B cell (primary cell): ENCODE measurements at regions of chr18 and their contacts with region 1.

Region 1: DNA sequence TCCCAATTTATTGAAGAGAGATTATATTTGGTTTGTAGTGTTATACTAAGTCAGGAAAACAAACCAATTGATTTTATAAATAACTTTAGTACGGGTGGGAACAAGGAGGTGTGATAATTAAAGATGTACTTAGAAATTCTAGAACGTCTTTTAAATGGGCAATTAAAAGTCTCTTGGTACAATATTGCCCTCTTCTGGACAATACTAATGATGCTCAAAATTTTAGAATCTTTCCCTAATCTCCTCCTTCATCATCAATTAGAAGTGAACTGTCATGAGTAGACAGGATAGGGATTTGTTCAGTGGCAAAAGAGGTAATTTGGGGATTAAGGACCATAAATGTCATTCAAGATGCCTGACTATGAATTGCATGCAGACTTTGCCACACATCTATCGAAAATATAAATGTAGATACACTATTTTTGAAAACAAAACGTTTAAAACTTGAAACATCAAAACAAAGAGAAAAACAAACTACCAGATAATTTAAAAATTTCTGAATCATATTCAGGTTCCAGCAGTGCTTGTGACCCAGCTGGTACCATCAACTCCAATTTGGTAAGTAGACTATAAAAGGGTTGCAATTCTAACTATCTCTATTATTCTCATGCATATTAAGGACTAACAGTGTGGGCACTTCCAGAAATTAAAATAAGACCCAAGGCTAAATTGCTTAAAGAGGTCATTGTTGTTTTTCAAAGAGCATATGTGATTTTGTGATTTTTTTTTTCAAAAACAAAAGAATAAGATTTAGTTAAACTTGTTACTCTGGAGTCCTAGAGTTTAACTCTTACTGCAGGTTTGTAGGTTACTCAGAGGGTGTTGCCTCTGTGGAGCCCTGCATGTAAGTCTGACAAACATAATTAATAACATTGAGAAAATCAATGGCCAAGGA is 123.5 kb downstream of the LAMA3 start:
- DNase-seq: peak; percentile 40
- ATAC-seq: peak; percentile 33
- H3K4me3 ChIP-seq: no peak overlapping the region
- H3K4me3 Mint-ChIP-seq: no peak overlapping the region
- H3K27ac ChIP-seq: no peak overlapping the region
- H3K27ac Mint-ChIP-seq: no peak overlapping the region
- H3K4me1 ChIP-seq: peaks cover 5 to 8% of the 10 kb centered on the region in 2 donors
- H3K4me1 Mint-ChIP-seq: peaks cover 8% of the 10 kb centered on the region
- H3K27me3 ChIP-seq: no peaks in the 10 kb centered on the region
- H3K27me3 Mint-ChIP-seq: peaks cover 5% of the 10 kb centered on the region
- CTCF ChIP-seq: peak; percentile 71

Region 2: DNA sequence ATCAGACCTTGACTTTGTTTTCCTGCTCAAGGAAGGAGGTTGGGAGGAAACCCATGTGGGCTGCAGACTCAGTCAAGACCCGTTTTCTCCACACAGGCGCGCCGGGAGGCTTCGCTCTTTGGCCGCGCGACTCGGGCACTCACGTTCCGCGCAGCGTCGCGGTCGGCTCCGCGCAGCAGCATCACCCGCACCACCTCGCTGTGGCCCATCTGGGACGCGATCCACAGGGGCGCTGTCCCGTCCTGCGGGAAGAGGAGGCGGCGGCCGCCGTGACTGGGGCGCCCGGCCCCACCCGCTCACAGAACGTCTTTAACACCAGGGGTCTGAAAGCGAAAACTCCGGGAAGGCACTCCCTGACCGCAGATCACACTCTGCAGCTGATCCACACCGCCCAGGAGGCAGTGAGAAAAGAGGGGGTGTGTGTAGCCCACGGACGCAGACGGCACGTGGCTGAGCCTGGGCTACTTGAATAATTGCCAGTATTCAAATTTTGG is 193.4 kb before region 1 on chr18:
- CTCF ChIA-PET with region 1: no interaction called
- POLR2A ChIA-PET with region 1: no interaction called
- intact Hi-C with region 1: loop called (anchors 1 kb)
- DNase-seq: peak; percentile 34
- ATAC-seq: peak; percentile 33
- H3K4me3 ChIP-seq: peak overlapping the region; percentile 4 to 52 (median 38)
- H3K4me3 Mint-ChIP-seq: peak overlapping the region; percentile 77
- H3K27ac ChIP-seq: no peak overlapping the region
- H3K27ac Mint-ChIP-seq: no peak overlapping the region
- H3K4me1 ChIP-seq: peaks cover 12 to 15% of the 10 kb centered on the region in 2 donors
- H3K4me1 Mint-ChIP-seq: peaks cover 18% of the 10 kb centered on the region
- H3K27me3 ChIP-seq: peaks cover 0 to 34% (median 25%) of the 10 kb centered on the region in 4 experiments
- H3K27me3 Mint-ChIP-seq: peaks cover 48% of the 10 kb centered on the region
- CTCF ChIP-seq: no peak

Region 3: DNA sequence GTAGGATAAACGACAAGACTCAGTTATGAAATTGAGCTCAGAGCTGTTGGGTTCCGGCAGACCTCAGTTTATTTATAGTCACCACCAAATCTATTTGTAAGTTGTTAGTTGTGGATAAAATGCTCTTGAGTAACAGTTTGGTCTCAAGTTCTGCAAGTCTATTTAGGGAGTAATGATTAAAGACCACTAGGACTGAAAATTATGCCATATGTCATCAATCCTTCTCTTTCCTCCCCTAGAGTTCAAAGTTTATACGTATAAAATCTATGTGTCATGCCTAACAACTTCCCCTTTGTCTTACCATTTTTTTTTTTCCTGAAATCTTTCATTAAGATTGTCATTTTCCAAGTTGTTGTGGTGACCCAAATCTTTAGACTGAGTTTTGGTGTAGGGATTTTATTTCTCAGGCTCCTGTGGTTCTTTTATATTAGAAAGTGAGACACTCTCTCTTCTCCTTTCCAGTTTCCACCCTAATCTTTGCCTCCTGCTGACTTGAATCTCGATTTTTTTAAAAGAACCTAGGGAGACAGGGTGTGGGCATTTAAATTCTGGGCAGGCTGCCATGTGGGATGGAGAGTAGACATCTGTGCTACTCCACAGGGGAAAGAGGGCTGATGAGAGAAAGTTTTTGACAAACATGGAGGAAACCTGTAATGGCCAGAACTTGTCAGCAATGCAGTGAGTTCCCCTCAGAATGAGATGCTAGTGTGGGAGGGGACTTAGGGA is 72.5 kb before region 1 on chr18:
- CTCF ChIA-PET with region 1: no interaction called
- POLR2A ChIA-PET with region 1: no interaction called
- intact Hi-C with region 1: no loop called
- DNase-seq: no peak
- ATAC-seq: no peak
- H3K4me3 ChIP-seq: no peak overlapping the region
- H3K4me3 Mint-ChIP-seq: no peak overlapping the region
- H3K27ac ChIP-seq: no peak overlapping the region
- H3K27ac Mint-ChIP-seq: no peak overlapping the region
- H3K4me1 ChIP-seq: no peaks in the 10 kb centered on the region
- H3K4me1 Mint-ChIP-seq: no peaks in the 10 kb centered on the region
- H3K27me3 ChIP-seq: peaks cover 0 to 7% (median 0%) of the 10 kb centered on the region in 4 experiments
- H3K27me3 Mint-ChIP-seq: peaks cover 53% of the 10 kb centered on the region
- CTCF ChIP-seq: no peak